ENCODE measurements at regions of chr12 and their contacts with region 1.

Region 1: GRCh38 chr12:51430231-51430906 is 5.7 kb downstream of the SLC4A8 start:
- DNase-seq: peak; percentile 68 to 69
- H3K4me3 ChIP-seq: no peak overlapping the region
- H3K4me3 Mint-ChIP-seq: no peak overlapping the region
- H3K27ac Mint-ChIP-seq: peak overlapping the region; percentile 79
- H3K4me1 ChIP-seq: peaks cover 48% of the 10 kb centered on the region
- H3K4me1 Mint-ChIP-seq: peaks cover 54% of the 10 kb centered on the region
- H3K27me3 ChIP-seq: no peaks in the 10 kb centered on the region
- H3K27me3 Mint-ChIP-seq: no peaks in the 10 kb centered on the region
- CTCF ChIP-seq: no peak

Region 2: GRCh38 chr12:51441583-51441982 is 11.2 kb after region 1 on chr12:
- CTCF ChIA-PET with region 1: interaction called, 10 read pairs
- POLR2A ChIA-PET with region 1: no interaction called
- intact Hi-C with region 1: loop called (anchors 1 kb)
- DNase-seq: no peak
- H3K4me3 ChIP-seq: no peak overlapping the region
- H3K4me3 Mint-ChIP-seq: no peak overlapping the region
- H3K27ac Mint-ChIP-seq: peak overlapping the region; percentile 8
- H3K4me1 ChIP-seq: peaks cover 70% of the 10 kb centered on the region
- H3K4me1 Mint-ChIP-seq: peaks cover 47% of the 10 kb centered on the region
- H3K27me3 ChIP-seq: no peaks in the 10 kb centered on the region
- H3K27me3 Mint-ChIP-seq: no peaks in the 10 kb centered on the region
- CTCF ChIP-seq: no peak

Region 3: GRCh38 chr12:51460519-51460918 is 30.1 kb after region 1 on chr12:
- CTCF ChIA-PET with region 1: no interaction called
- POLR2A ChIA-PET with region 1: no interaction called
- intact Hi-C with region 1: loop called (anchors 2 kb)
- DNase-seq: peak in 1 of 2 experiments; percentile 36
- H3K4me3 ChIP-seq: no peak overlapping the region
- H3K4me3 Mint-ChIP-seq: no peak overlapping the region
- H3K27ac Mint-ChIP-seq: no peak overlapping the region
- H3K4me1 ChIP-seq: peaks cover 18% of the 10 kb centered on the region
- H3K4me1 Mint-ChIP-seq: peaks cover 22% of the 10 kb centered on the region
- H3K27me3 ChIP-seq: no peaks in the 10 kb centered on the region
- H3K27me3 Mint-ChIP-seq: no peaks in the 10 kb centered on the region
- CTCF ChIP-seq: no peak

Region 4: GRCh38 chr12:51471111-51471864 is 40.9 kb after region 1 on chr12:
- CTCF ChIA-PET with region 1: interaction called, 3 read pairs
- POLR2A ChIA-PET with region 1: interaction called, 8 read pairs
- intact Hi-C with region 1: loop called (anchors 1 kb)
- DNase-seq: no peak
- H3K4me3 ChIP-seq: no peak overlapping the region
- H3K4me3 Mint-ChIP-seq: no peak overlapping the region
- H3K27ac Mint-ChIP-seq: peak overlapping the region; percentile 4
- H3K4me1 ChIP-seq: peaks cover 28% of the 10 kb centered on the region
- H3K4me1 Mint-ChIP-seq: peaks cover 15% of the 10 kb centered on the region
- H3K27me3 ChIP-seq: no peaks in the 10 kb centered on the region
- H3K27me3 Mint-ChIP-seq: no peaks in the 10 kb centered on the region
- CTCF ChIP-seq: no peak

Region 5: GRCh38 chr12:51729331-51729730 is 299.0 kb after region 1 on chr12:
- CTCF ChIA-PET with region 1: no interaction called
- POLR2A ChIA-PET with region 1: no interaction called
- intact Hi-C with region 1: no loop called
- DNase-seq: no peak
- H3K4me3 ChIP-seq: no peak overlapping the region
- H3K4me3 Mint-ChIP-seq: no peak overlapping the region
- H3K27ac Mint-ChIP-seq: no peak overlapping the region
- H3K4me1 ChIP-seq: no peaks in the 10 kb centered on the region
- H3K4me1 Mint-ChIP-seq: no peaks in the 10 kb centered on the region
- H3K27me3 ChIP-seq: no peaks in the 10 kb centered on the region
- H3K27me3 Mint-ChIP-seq: no peaks in the 10 kb centered on the region
- CTCF ChIP-seq: no peak

Measured in Caco-2 (cell line).